Left lung (tissue), 14 donors: ENCODE measurements at regions of chr15 and their contacts with region 1.

Region 1: DNA sequence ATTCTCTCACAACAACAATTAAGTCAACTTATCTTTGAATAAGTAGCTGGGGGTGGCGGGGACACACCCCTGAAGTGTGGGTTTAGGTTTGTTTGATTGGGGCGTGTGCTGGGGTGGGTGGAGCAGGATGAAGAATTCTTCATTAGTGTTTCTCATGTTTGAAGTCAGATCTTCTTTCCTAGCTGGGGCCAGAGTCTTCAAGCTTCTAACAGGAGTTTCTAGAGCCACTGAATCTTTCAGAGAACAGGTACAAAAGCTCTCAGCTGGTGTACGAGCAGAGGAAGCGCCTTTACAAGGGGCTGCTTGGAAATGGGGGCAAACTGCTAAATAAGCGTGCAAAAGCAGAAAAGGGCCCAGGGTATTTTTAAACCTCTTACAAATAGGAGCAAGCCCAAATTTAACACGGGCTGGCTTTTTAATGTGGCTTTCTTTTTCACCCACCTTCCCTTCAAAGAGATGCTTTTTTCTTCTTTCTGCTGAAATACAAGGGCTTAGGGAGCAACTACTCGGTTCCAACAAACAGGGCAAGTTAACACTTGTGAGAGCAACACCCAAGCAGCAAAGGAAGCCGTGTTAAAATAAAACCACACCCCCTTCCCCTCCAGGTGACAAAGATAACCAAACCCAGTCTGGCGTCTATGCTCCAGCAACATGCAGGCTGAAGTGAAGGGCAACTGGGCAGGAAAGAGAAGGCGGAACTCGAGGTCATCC is 86.9 kb upstream of the RASGRP1 start:
- DNase-seq: no peak
- ATAC-seq: peak; percentile 39
- H3K4me3 ChIP-seq: no peak overlapping the region
- H3K27ac ChIP-seq: no peak overlapping the region
- H3K4me1 ChIP-seq: peaks cover 0 to 4% of the 10 kb centered on the region in 2 donors
- H3K27me3 ChIP-seq: no peaks in the 10 kb centered on the region
- CTCF ChIP-seq: no peak

Region 2: DNA sequence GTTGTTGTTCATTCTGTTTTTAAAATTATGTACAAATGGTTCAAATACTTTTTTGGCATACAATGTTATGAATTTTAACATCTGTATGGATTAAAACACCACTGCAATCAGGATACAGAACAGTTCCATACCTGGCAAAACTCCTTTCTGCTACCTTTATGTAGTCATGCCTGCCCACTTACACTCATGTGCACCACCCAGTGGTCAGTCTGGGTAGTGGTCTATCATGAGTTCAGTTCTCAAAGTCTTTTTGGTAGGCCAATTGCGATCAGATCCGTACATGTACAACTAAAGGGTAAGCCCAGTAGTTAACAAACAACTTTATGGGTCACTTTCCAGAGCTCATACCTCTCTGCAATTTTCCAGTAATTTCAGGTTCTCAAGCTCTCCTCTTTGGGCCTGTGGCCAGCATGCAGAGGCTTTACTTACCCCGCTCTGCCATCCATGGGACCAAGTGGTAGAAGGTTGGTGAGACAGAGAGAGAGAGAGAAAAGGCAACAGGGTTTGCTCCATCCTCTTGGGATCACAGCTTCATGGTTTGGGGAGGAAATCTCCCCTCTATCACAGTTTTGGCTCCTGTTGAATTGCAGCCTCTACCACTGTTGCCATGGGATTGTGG is 261.4 kb before region 1 on chr15:
- intact Hi-C with region 1: no loop called
- DNase-seq: peak in 3 of 4 donors; percentile 38 to 67 (median 49)
- ATAC-seq: peak; percentile 99
- H3K4me3 ChIP-seq: no peak overlapping the region
- H3K27ac ChIP-seq: no peak overlapping the region
- H3K4me1 ChIP-seq: no peaks in the 10 kb centered on the region
- H3K27me3 ChIP-seq: no peaks in the 10 kb centered on the region
- CTCF ChIP-seq: peak; percentile 79 to 84

Region 3: GRCh38 chr15:38563723-38564519 is 87.6 kb before region 1 on chr15:
- intact Hi-C with region 1: loop called in 1 of 2 experiments (anchors 10 kb)
- DNase-seq: peak; percentile 53 to 95 (median 68)
- ATAC-seq: peak; percentile 96
- H3K4me3 ChIP-seq: peak overlapping the region; percentile 53 to 63
- H3K27ac ChIP-seq: peak overlapping the region; percentile 47 to 70
- H3K4me1 ChIP-seq: peaks cover 0 to 21% of the 10 kb centered on the region in 2 donors
- H3K27me3 ChIP-seq: peaks cover 7 to 34% of the 10 kb centered on the region in 2 donors
- CTCF ChIP-seq: peak; percentile 73 to 92